Calu3 (cell line): ENCODE measurements at regions of chr6 and their contacts with region 1.

Region 1: GRCh38 chr6:100176311-100176950 is 182.4 kb upstream of the MCHR2 start:
- DNase-seq: peak; percentile 53
- H3K4me3 Mint-ChIP-seq: no peak overlapping the region
- H3K27ac Mint-ChIP-seq: peak overlapping the region; percentile 77
- H3K4me1 Mint-ChIP-seq: peaks cover 24% of the 10 kb centered on the region
- H3K27me3 Mint-ChIP-seq: no peaks in the 10 kb centered on the region
- CTCF ChIP-seq: peak; percentile 26

Region 2: DNA sequence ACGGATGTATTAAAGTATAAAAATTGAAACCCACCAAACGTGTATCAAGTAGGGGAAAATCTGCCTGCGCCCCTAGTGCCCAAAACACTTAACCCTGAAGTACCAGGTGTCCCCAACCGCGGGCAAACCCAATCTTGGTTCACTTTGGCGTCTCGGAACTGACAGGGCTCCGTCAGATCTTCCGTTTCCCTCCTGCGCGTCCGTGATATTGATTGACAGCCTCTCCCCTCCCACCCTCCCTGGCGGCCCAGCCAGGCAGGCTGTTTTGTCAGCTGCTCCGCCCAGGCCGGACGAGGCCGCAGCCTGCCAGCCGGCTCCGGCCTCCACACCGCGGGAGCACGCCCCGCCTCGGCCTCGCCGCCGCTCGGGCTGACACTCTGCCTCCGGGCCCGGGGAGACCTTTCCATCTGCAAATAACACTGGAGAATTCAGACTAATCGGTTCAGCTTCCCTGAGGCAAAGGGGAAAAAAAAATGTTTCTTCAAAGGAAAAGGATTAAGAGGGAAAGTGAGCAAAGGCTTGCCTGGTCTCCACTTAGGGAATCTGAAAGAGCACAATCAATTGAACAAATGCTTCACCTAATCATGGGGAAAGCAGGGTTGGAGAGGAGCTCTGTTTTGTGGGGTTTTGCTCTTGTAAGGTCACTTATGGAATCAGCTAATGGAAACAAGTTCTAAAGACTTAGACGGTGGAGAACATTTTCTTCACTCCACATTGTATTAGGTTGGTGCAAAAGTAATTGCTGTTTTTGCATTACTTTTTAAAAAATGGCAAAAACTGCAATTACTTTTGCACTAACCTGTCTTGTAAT is 52.6 kb after region 1 on chr6:
- CTCF ChIA-PET with region 1: interaction called, 3 read pairs
- intact Hi-C with region 1: loop called (anchors 2 kb)
- DNase-seq: peak; percentile 77
- H3K4me3 Mint-ChIP-seq: peak overlapping the region; percentile 75
- H3K27ac Mint-ChIP-seq: peak overlapping the region; percentile 73
- H3K4me1 Mint-ChIP-seq: peaks cover 38% of the 10 kb centered on the region
- H3K27me3 Mint-ChIP-seq: no peaks in the 10 kb centered on the region
- CTCF ChIP-seq: no peak

Region 3: GRCh38 chr6:100283283-100283682 is 106.9 kb after region 1 on chr6:
- CTCF ChIA-PET with region 1: no interaction called
- intact Hi-C with region 1: loop called (anchors 1 kb)
- DNase-seq: peak; percentile 77
- H3K4me3 Mint-ChIP-seq: no peak overlapping the region
- H3K27ac Mint-ChIP-seq: peak overlapping the region; percentile 39
- H3K4me1 Mint-ChIP-seq: peaks cover 26% of the 10 kb centered on the region
- H3K27me3 Mint-ChIP-seq: no peaks in the 10 kb centered on the region
- CTCF ChIP-seq: no peak

Region 4: DNA sequence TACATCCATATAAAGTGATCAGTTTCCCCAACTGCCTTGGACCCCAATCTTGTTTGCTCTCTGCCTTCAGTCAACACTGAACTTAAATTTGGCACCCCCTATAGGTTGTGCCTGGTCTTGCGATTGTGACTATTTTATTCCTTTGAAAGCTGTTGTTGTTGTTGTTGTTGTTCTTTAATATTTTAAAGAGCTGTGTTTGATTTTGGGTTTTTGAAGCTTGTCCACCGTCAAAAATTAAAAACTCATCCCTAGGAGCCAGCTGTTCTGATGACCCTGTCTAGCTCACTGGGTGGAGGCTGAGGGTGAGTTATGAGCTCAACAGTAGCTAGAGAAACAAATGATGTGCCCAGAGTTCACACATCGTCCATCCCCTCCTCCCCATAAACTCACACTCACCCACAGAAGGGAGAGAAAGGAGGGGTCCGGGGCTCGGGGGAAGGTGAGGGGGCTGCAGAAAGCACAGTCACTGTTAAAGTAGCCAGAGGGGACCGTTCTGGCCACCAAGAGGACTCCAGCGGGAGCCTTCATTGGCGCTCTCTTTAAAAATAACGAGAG is 284.3 kb after region 1 on chr6:
- CTCF ChIA-PET with region 1: interaction called, 13 read pairs
- intact Hi-C with region 1: no loop called
- DNase-seq: peak; percentile 23
- H3K4me3 Mint-ChIP-seq: peak overlapping the region; percentile 86
- H3K27ac Mint-ChIP-seq: no peak overlapping the region
- H3K4me1 Mint-ChIP-seq: peaks cover 8% of the 10 kb centered on the region
- H3K27me3 Mint-ChIP-seq: no peaks in the 10 kb centered on the region
- CTCF ChIP-seq: peak; percentile 71

Region 5: GRCh38 chr6:100479179-100480035 is 303.0 kb after region 1 on chr6:
- CTCF ChIA-PET with region 1: no interaction called
- intact Hi-C with region 1: loop called (anchors 2 kb)
- DNase-seq: peak; percentile 30
- H3K4me3 Mint-ChIP-seq: no peak overlapping the region
- H3K27ac Mint-ChIP-seq: no peak overlapping the region
- H3K4me1 Mint-ChIP-seq: peaks cover 40% of the 10 kb centered on the region
- H3K27me3 Mint-ChIP-seq: no peaks in the 10 kb centered on the region
- CTCF ChIP-seq: peak; percentile 42